ENCODE measurements at regions of chr4 and their contacts with region 1.

Region 1: DNA sequence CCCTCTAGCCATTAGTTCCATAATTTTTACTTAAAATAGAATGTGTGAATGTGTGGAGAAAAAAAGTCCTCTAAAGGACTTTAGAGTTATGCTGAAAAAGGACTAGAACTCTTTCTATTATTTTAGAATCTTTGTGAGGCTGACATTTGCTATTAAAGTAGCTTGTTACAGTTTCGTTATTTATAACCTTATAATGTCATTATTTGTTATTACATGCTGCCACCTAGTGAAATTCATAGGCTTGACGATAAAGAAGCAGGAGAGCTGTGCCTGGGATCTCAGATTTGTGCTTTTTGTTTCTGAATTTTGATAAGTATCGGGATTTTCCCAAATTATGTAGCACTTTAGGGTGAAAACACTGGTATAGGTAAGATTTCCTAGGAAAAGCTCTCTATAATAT is 38.5 kb upstream of the TAPT1 start:
- DNase-seq: peak; percentile 10
- ATAC-seq: peak; percentile 58
- H3K4me3 Mint-ChIP-seq: no peak overlapping the region
- H3K27ac Mint-ChIP-seq: no peak overlapping the region
- H3K4me1 Mint-ChIP-seq: peaks cover 22% of the 10 kb centered on the region
- H3K27me3 Mint-ChIP-seq: no peaks in the 10 kb centered on the region
- CTCF ChIP-seq: peak; percentile 58

Region 2: GRCh38 chr4:16026160-16026761 is 238.5 kb before region 1 on chr4:
- CTCF ChIA-PET with region 1: interaction called, 50 read pairs
- POLR2A ChIA-PET with region 1: no interaction called
- intact Hi-C with region 1: loop called (anchors 1 kb)
- DNase-seq: peak; percentile 30
- ATAC-seq: no peak
- H3K4me3 Mint-ChIP-seq: no peak overlapping the region
- H3K27ac Mint-ChIP-seq: no peak overlapping the region
- H3K4me1 Mint-ChIP-seq: no peaks in the 10 kb centered on the region
- H3K27me3 Mint-ChIP-seq: peaks cover 13% of the 10 kb centered on the region
- CTCF ChIP-seq: peak; percentile 82

Region 3: DNA sequence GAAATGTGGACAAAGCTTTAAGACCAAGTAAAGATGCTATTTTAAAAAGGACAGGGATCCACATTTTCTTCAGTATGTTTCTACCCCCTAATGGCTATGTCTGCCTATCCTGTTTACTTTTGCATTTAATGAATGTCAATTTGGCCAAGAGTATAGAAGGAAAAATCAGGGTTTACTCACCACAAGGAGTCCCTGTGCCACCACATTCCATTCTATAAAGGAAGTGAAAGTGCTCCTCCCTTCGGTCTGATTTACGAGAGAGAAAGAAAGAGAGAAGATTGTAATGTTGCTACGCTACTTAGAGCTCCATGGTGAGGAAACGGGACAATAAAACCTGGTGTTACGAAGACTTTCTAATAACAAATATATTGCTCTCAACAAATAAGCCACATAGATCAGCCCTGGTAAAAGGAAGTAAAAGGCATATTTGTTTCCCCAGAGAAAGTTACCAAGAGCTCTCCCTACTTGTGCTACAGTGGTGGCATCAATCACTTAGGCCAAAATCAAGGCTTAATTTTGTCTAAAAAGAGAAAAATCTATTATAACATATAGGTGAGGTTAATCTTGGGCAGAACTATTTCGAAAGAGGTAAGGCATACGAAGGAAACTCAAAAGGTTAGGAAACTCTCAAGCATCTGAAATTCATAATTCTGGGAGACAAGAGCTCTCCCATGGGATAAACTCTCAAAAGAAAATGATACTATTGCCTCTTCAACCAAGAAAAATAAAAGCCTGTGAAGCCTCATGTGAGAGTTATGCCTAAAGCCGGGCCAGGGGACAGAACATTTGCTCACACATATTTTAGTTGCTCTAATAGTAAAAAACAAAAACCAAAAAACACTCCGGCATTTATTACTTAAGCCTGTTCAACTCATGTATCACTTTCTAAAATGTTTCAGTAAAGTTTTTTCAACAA is 68.1 kb before region 1 on chr4:
- CTCF ChIA-PET with region 1: interaction called, 28 read pairs
- POLR2A ChIA-PET with region 1: no interaction called
- intact Hi-C with region 1: loop called (anchors 10 kb)
- DNase-seq: no peak
- ATAC-seq: no peak
- H3K4me3 Mint-ChIP-seq: no peak overlapping the region
- H3K27ac Mint-ChIP-seq: peak overlapping the region; percentile 18
- H3K4me1 Mint-ChIP-seq: peaks cover 22% of the 10 kb centered on the region
- H3K27me3 Mint-ChIP-seq: no peaks in the 10 kb centered on the region
- CTCF ChIP-seq: no peak

Region 4: GRCh38 chr4:16225863-16226815 is 38.7 kb before region 1 on chr4 and contains the start of gene TAPT1:
- CTCF ChIA-PET with region 1: interaction called, 13 read pairs
- POLR2A ChIA-PET with region 1: interaction called, 7 read pairs
- intact Hi-C with region 1: loop called (anchors 5 kb)
- DNase-seq: peak; percentile 80
- ATAC-seq: peak; percentile 82
- H3K4me3 Mint-ChIP-seq: peak within 1 kb of the TSS; percentile 91
- H3K27ac Mint-ChIP-seq: peak within 1 kb of the TSS; percentile 98
- H3K4me1 Mint-ChIP-seq: peaks cover 61% of the 10 kb centered on the region
- H3K27me3 Mint-ChIP-seq: no peaks in the 10 kb centered on the region
- CTCF ChIP-seq: no peak
- total RNA-seq, gene TAPT1: 34.2 to 35.5 TPM

Region 5: GRCh38 chr4:16250665-16251365 is 14.0 kb before region 1 on chr4:
- CTCF ChIA-PET with region 1: interaction called, 12 read pairs
- POLR2A ChIA-PET with region 1: interaction called, 8 read pairs
- intact Hi-C with region 1: no loop called
- DNase-seq: no peak
- ATAC-seq: no peak
- H3K4me3 Mint-ChIP-seq: no peak overlapping the region
- H3K27ac Mint-ChIP-seq: no peak overlapping the region
- H3K4me1 Mint-ChIP-seq: peaks cover 8% of the 10 kb centered on the region
- H3K27me3 Mint-ChIP-seq: no peaks in the 10 kb centered on the region
- CTCF ChIP-seq: no peak